H1 (cell line): ENCODE measurements at regions of chr19 and their contacts with region 1.

Region 1: GRCh38 chr19:14556662-14557188 is 15.1 kb downstream of the NDUFB7 start:
- DNase-seq: peak; percentile 81 to 90
- H3K4me3 ChIP-seq: no peak overlapping the region
- H3K27ac ChIP-seq: no peak overlapping the region
- H3K4me1 ChIP-seq: peaks cover 0 to 25% (median 19%) of the 10 kb centered on the region in 4 experiments; a peak in 6 of 7 replicates
- H3K27me3 ChIP-seq: no peaks in the 10 kb centered on the region
- CTCF ChIP-seq: peak; percentile 92 to 99 (median 99)
- EP300 ChIP-seq: peak in 1 of 2 experiments; percentile 16; a peak in 1 of 3 replicates
- POLR2A ChIP-seq: no peak
- RAD21 ChIP-seq: peak; percentile 60 to 72

Region 2: GRCh38 chr19:14405758-14406644 is 150.7 kb before region 1 on chr19:
- CTCF ChIA-PET with region 1: no interaction called
- POLR2A ChIA-PET with region 1: no interaction called
- DNase-seq: peak; percentile 97 to 99
- H3K4me3 ChIP-seq: peak overlapping the region; percentile 13 to 48 (median 22); a peak in 4 of 8 replicates
- H3K27ac ChIP-seq: peak overlapping the region; percentile 44
- H3K4me1 ChIP-seq: peaks cover 0 to 13% (median 5%) of the 10 kb centered on the region in 4 experiments; a peak in 5 of 7 replicates
- H3K27me3 ChIP-seq: no peaks in the 10 kb centered on the region
- CTCF ChIP-seq: peak; percentile 81 to 97 (median 97)
- EP300 ChIP-seq: no peak
- POLR2A ChIP-seq: peak in 1 of 2 experiments; percentile 65; a peak in 1 of 3 replicates
- RAD21 ChIP-seq: peak; percentile 90 to 96

Region 3: DNA sequence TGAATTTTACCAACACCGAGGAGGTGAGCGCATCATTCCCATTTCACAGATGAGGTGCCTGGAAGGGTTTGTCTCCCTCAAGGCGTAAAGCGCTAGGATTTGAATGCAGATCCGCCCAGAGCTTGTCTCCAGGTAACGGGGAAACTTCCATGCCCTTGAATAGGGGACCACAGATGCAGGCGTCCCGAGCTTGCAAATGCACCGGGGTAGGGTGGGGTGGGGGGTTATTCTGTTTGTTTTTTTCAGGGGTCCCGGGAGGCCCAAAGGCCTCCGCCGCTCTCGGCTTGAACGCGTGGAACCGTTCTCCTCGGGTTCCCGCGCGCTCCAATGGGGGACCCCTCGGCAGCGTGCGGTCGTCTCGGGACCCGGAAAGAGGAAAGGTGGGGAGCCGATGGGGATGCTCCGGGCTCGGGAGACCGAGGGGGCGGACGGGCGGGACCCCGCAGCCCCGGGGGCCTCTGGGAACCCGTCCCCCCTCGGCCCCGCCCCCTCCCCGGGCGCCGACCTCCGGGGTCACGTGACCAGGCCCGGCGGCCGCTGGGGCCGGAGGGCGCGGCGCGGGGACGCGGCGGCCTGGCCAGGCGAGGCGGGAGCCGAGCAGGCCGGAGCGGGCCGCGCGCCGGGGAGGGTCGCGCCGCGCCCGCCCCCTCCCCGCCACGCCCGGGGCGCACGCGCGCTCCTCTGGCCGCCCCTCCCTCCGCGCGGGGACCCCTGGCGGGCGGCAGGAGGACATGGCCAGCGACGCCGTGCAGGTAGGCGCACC is 123.8 kb before region 1 on chr19 and contains the start of gene PKN1:
- CTCF ChIA-PET with region 1: no interaction called
- POLR2A ChIA-PET with region 1: no interaction called
- DNase-seq: peak in 1 of 2 experiments; percentile 86
- H3K4me3 ChIP-seq: peak within 1 kb of the TSS; percentile 54 to 96 (median 68)
- H3K27ac ChIP-seq: no peak within 1 kb of the TSS
- H3K4me1 ChIP-seq: peaks cover 0 to 11% (median 3%) of the 10 kb centered on the region in 4 experiments; a peak in 5 of 7 replicates
- H3K27me3 ChIP-seq: no peaks in the 10 kb centered on the region; a peak in 1 of 7 replicates
- CTCF ChIP-seq: no peak
- EP300 ChIP-seq: 0 out of 3 replicates have a peak, but pooled peaks of 1 of the 2 experiments have one; percentile 23
- POLR2A ChIP-seq: peak in 1 of 2 experiments; percentile 30; a peak in 1 of 3 replicates
- RAD21 ChIP-seq: no peak
- total RNA-seq, gene PKN1: 161 and 162 TPM in 2 replicates

Region 4: DNA sequence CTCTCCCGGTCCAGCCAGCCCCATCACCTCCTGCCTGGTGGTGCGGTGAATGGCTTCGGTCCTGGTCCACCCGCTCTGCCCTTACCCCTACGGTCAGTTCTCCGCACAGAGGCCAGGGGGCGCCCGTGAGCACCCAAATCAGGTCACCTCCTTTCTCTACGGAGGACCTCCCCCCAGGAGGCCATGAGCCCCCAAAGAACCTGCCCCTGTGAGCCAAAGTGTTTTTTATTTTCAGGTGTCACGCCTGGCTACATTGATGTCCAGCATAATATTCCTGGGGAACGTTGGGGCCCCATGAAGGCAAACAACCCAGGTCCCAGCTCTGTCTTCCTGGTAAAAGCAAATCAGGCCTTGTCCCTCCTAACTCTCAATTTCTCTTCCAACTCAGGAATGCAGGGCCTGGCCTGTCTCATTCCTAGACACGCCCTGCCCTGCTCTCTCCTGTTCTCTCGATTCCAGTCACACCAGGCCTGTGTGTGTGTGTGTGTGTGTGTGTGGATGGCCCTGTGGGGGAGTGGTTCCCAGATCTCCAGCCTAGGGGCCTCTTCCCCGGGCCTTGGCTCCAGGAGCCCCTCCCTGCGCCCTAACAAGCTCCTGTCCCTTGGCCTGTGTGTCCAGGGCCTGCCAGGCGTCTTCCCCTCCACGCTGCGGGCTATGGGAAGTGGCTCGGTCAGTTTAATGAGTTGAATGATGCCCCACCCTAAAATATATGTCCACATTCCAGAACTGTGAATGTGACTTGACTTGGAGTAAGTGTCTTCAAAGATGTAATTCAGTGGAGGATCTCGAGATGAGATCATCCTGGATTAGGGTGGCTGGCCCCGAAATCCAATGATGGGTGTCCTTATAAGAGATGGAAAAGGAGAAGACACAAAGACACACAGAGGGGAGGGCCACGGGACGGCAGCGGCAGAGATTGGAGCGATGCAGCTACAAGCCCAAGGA is 51.0 kb before region 1 on chr19:
- CTCF ChIA-PET with region 1: interaction called, 10 read pairs
- POLR2A ChIA-PET with region 1: interaction called, 4 read pairs
- DNase-seq: peak in 1 of 2 experiments; percentile 97
- H3K4me3 ChIP-seq: no peak overlapping the region
- H3K27ac ChIP-seq: peak overlapping the region; percentile 37; the same call in 1 of the 2 replicates
- H3K4me1 ChIP-seq: peaks cover 0 to 4% (median 2%) of the 10 kb centered on the region in 4 experiments; a peak in 3 of 7 replicates
- H3K27me3 ChIP-seq: no peaks in the 10 kb centered on the region
- CTCF ChIP-seq: peak; percentile 75 to 92 (median 89)
- EP300 ChIP-seq: no peak
- POLR2A ChIP-seq: no peak
- RAD21 ChIP-seq: peak in 1 of 2 experiments; percentile 47; a peak in 3 of 4 replicates

Region 5: GRCh38 chr19:14536926-14537692 is 19.6 kb before region 1 on chr19:
- CTCF ChIA-PET with region 1: interaction called, 18 read pairs
- POLR2A ChIA-PET with region 1: interaction called, 8 read pairs
- DNase-seq: peak; percentile 87 to 94
- H3K4me3 ChIP-seq: peak overlapping the region; percentile 33 to 51 (median 38); a peak in 7 of 8 replicates
- H3K27ac ChIP-seq: no peak overlapping the region
- H3K4me1 ChIP-seq: peaks cover 3 to 6% (median 4%) of the 10 kb centered on the region in 4 experiments; a peak in 5 of 7 replicates
- H3K27me3 ChIP-seq: no peaks in the 10 kb centered on the region; a peak in 1 of 7 replicates
- CTCF ChIP-seq: no peak
- EP300 ChIP-seq: no peak
- POLR2A ChIP-seq: no peak
- RAD21 ChIP-seq: no peak

Region 6: GRCh38 chr19:14571695-14572490 is 15.2 kb after region 1 on chr19 and contains the start of gene NDUFB7:
- CTCF ChIA-PET with region 1: interaction called, 47 read pairs
- POLR2A ChIA-PET with region 1: interaction called, 11 read pairs
- DNase-seq: peak; percentile 85 to 87
- H3K4me3 ChIP-seq: peak within 1 kb of the TSS; percentile 50 to 98 (median 89)
- H3K27ac ChIP-seq: peak within 1 kb of the TSS; percentile 63
- H3K4me1 ChIP-seq: peaks cover 0 to 4% (median 2%) of the 10 kb centered on the region in 4 experiments; a peak in 3 of 7 replicates
- H3K27me3 ChIP-seq: no peaks in the 10 kb centered on the region
- CTCF ChIP-seq: peak; percentile 87 to 95 (median 90)
- EP300 ChIP-seq: no peak
- POLR2A ChIP-seq: peak in 1 of 2 experiments; percentile 88; a peak in 2 of 3 replicates
- RAD21 ChIP-seq: peak; percentile 32 to 38; a peak in 3 of 4 replicates
- total RNA-seq, gene NDUFB7: 151 and 161 TPM in 2 replicates

Region 7: GRCh38 chr19:14603990-14604387 is 47.3 kb after region 1 on chr19:
- CTCF ChIA-PET with region 1: no interaction called
- POLR2A ChIA-PET with region 1: no interaction called
- DNase-seq: no peak
- H3K4me3 ChIP-seq: no peak overlapping the region
- H3K27ac ChIP-seq: no peak overlapping the region
- H3K4me1 ChIP-seq: no peaks in the 10 kb centered on the region
- H3K27me3 ChIP-seq: no peaks in the 10 kb centered on the region
- CTCF ChIP-seq: no peak
- EP300 ChIP-seq: no peak
- POLR2A ChIP-seq: no peak
- RAD21 ChIP-seq: no peak